Left lung (tissue), 14 donors: ENCODE measurements at regions of chr13 and their contacts with region 1.

Region 1: GRCh38 chr13:99442273-99442895 is 58.9 kb upstream of the TM9SF2 start:
- DNase-seq: peak in 1 of 4 donors; percentile 48
- ATAC-seq: peak; percentile 87
- H3K4me3 ChIP-seq: no peak overlapping the region
- H3K27ac ChIP-seq: no peak overlapping the region
- H3K4me1 ChIP-seq: no peaks in the 10 kb centered on the region
- H3K27me3 ChIP-seq: peaks cover 0 to 23% of the 10 kb centered on the region in 2 donors
- CTCF ChIP-seq: peak; percentile 95 to 96

Region 2: DNA sequence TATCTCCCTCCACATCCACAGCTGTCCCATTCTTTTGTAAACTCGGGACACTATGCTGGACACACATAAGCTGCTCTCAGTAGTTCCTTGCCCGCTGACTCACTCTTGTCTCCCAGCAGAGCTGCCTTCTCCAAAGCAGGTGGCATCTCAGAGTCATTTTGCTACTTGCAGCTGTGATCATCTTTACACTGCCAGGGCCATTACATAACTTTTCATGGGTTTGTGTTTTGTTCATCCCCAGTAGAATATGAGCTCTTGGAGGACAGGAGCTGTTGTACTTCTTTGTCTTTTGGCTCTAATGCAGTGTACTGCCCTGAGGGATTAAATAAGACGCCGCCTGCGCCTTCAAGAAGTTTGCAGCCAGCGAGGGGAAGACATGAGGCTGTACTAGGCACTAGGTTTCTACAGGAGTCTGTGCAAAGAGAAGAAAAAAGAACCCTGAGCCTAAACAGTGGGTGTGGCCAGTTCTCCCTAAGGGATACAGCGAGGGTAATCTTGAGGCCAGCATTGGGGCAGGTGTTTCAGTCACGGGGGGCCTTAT is 94.4 kb before region 1 on chr13:
- intact Hi-C with region 1: no loop called
- DNase-seq: no peak
- ATAC-seq: no peak
- H3K4me3 ChIP-seq: no peak overlapping the region
- H3K27ac ChIP-seq: no peak overlapping the region
- H3K4me1 ChIP-seq: no peaks in the 10 kb centered on the region
- H3K27me3 ChIP-seq: no peaks in the 10 kb centered on the region
- CTCF ChIP-seq: no peak

Region 3: GRCh38 chr13:99528547-99528946 is 86.2 kb after region 1 on chr13:
- intact Hi-C with region 1: loop called in 1 of 2 experiments (anchors 10 kb)
- DNase-seq: no peak
- ATAC-seq: peak; percentile 61
- H3K4me3 ChIP-seq: no peak overlapping the region
- H3K27ac ChIP-seq: no peak overlapping the region
- H3K4me1 ChIP-seq: no peaks in the 10 kb centered on the region
- H3K27me3 ChIP-seq: no peaks in the 10 kb centered on the region
- CTCF ChIP-seq: no peak

Region 4: GRCh38 chr13:99577934-99578917 is 135.8 kb after region 1 on chr13:
- intact Hi-C with region 1: no loop called
- DNase-seq: no peak
- ATAC-seq: peak; percentile 23
- H3K4me3 ChIP-seq: no peak overlapping the region
- H3K27ac ChIP-seq: no peak overlapping the region
- H3K4me1 ChIP-seq: no peaks in the 10 kb centered on the region
- H3K27me3 ChIP-seq: peaks cover 0 to 4% of the 10 kb centered on the region in 2 donors
- CTCF ChIP-seq: no peak

Region 5: DNA sequence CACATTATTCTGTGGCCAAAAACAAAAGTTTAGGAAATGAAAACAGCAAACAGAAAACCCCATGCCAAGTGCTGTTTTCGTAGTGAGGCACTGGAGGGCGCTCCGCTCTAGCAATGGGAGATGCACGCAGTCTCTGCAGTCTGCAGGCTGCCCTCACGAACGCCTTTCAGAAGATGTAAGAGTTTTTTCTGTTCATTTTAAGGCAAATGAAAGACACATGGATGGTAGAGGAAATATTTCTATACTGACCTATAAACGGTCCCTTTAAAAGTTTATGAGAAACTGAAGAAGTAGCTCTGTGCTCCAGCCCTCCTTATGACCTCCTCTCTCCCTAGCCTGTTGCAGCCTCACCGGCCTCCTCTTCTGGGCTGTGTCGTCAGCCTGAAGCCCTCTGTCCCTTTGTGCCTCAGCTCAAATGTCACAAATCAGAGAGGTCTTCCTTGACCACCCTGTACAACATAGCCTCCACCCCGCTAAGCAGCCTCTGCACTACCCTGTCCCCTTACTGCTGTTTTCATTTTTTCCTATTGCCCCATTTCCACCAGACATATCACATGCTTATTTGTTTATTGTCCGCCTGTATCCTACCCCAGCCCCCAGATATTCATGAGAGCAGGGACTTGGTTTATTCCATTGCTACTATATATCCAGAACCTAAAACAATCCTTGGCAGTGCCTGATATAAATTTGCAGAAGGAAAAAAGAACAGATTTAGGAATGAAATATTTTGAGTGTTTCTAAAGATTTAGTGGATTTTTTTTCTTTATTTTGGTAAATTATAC is 175.3 kb after region 1 on chr13:
- intact Hi-C with region 1: loop called in 1 of 2 experiments (anchors 10 kb)
- DNase-seq: peak in 1 of 4 donors; percentile 48
- ATAC-seq: peak; percentile 72
- H3K4me3 ChIP-seq: no peak overlapping the region
- H3K27ac ChIP-seq: no peak overlapping the region
- H3K4me1 ChIP-seq: no peaks in the 10 kb centered on the region
- H3K27me3 ChIP-seq: no peaks in the 10 kb centered on the region
- CTCF ChIP-seq: peak in 1 of 2 donors; percentile 32

Region 6: GRCh38 chr13:100051070-100051469 is 608.7 kb after region 1 on chr13:
- intact Hi-C with region 1: no loop called
- DNase-seq: no peak
- ATAC-seq: no peak
- H3K4me3 ChIP-seq: no peak overlapping the region
- H3K27ac ChIP-seq: no peak overlapping the region
- H3K4me1 ChIP-seq: no peaks in the 10 kb centered on the region
- H3K27me3 ChIP-seq: no peaks in the 10 kb centered on the region
- CTCF ChIP-seq: no peak